A673 (cell line): ENCODE measurements at regions of chr14 and their contacts with region 1.

Region 1: DNA sequence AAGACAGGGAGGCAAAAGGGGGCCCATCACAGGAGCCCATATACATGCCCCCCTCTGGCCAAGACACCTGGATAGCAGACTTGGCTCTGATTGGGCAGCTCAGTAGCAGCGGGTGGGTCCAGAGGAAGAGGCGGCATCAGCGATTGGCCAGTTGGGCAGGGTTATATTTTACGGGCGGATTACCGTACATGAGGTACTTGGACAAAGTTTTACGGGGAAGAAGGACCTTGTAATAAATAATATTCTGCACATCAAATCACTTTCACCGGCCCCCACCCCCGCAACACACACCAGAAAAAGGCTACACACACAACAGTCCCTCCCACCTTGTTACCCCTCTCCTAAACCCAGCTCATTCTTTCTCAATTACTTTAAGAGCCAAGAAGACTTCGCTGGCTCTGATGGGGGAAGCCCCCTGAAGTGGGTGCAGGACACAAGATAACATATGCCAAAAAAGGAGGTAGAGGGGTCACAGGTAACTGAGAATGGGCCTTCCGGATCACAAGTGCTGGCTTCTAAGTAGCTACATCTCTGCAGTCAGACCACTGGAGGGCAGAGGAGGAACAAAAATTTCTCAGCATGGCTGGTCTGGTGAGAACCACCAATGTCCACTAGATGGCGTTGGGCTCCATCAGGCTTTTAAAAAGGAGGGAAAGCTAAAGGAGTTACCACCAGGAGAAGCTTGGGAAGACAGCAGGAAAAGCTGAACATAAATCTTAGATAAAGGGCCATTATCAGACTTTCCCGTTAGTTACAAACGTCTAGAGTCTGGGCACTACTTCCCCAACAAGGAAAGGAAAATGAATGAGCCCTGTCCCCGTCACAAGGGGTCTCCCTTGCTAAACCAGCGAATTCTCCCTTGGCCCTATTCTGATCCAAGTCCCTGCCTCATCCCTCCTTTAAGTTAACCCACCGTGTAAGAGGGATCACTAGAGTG is 11.4 kb upstream of the CDH24 start:
- DNase-seq: peak; percentile 95
- H3K4me3 ChIP-seq: peak overlapping the region; percentile 5
- H3K27ac ChIP-seq: peak overlapping the region; percentile 57
- H3K4me1 ChIP-seq: peaks cover 38% of the 10 kb centered on the region
- H3K27me3 ChIP-seq: no peaks in the 10 kb centered on the region
- CTCF ChIP-seq: peak; percentile 100

Region 2: DNA sequence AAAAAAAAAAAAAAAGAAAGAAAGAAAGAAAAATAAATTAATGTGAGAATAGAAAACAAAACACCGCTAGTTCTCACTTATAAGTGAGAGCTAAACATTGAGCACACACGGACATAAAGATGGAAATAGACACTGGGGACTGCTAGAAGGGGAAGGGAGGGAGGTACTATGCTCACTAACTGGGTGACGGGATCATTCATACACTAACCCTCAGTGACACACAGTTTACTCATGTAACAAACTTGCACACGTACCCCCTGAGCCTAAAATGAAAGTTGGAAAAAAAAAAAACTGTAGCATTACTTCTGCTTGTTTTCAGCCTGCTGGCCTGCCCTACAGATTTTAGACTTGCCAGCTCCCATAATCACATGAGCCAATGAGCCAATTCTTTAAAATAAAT is 129.1 kb before region 1 on chr14:
- CTCF ChIA-PET with region 1: interaction called, 10 read pairs
- POLR2A ChIA-PET with region 1: no interaction called
- intact Hi-C with region 1: no loop called
- DNase-seq: no peak
- H3K4me3 ChIP-seq: no peak overlapping the region
- H3K27ac ChIP-seq: no peak overlapping the region
- H3K4me1 ChIP-seq: no peaks in the 10 kb centered on the region
- H3K27me3 ChIP-seq: no peaks in the 10 kb centered on the region
- CTCF ChIP-seq: no peak

Region 3: GRCh38 chr14:22994762-22995275 is 73.9 kb before region 1 on chr14:
- CTCF ChIA-PET with region 1: interaction called, 12 read pairs
- POLR2A ChIA-PET with region 1: no interaction called
- intact Hi-C with region 1: no loop called
- DNase-seq: peak; percentile 86
- H3K4me3 ChIP-seq: no peak overlapping the region
- H3K27ac ChIP-seq: peak overlapping the region; percentile 22
- H3K4me1 ChIP-seq: peaks cover 37% of the 10 kb centered on the region
- H3K27me3 ChIP-seq: no peaks in the 10 kb centered on the region
- CTCF ChIP-seq: peak; percentile 88

Region 4: GRCh38 chr14:23057757-23058653 is 10.7 kb before region 1 on chr14:
- CTCF ChIA-PET with region 1: interaction called, 14 read pairs
- POLR2A ChIA-PET with region 1: no interaction called
- intact Hi-C with region 1: no loop called
- DNase-seq: peak; percentile 93
- H3K4me3 ChIP-seq: peak overlapping the region; percentile 76
- H3K27ac ChIP-seq: peak overlapping the region; percentile 77
- H3K4me1 ChIP-seq: peaks cover 27% of the 10 kb centered on the region
- H3K27me3 ChIP-seq: no peaks in the 10 kb centered on the region
- CTCF ChIP-seq: peak; percentile 98

Region 5: GRCh38 chr14:23095196-23096108 is 26.7 kb after region 1 on chr14 and contains the start of gene C14orf119:
- CTCF ChIA-PET with region 1: interaction called, 26 read pairs
- POLR2A ChIA-PET with region 1: interaction called, 11 read pairs
- intact Hi-C with region 1: no loop called
- DNase-seq: peak; percentile 100
- H3K4me3 ChIP-seq: peak within 1 kb of the TSS; percentile 64
- H3K27ac ChIP-seq: peak within 1 kb of the TSS; percentile 94
- H3K4me1 ChIP-seq: peaks cover 28% of the 10 kb centered on the region
- H3K27me3 ChIP-seq: no peaks in the 10 kb centered on the region
- CTCF ChIP-seq: no peak
- total RNA-seq, gene C14orf119: 50.3 and 54.5 TPM in 2 replicates

Region 6: DNA sequence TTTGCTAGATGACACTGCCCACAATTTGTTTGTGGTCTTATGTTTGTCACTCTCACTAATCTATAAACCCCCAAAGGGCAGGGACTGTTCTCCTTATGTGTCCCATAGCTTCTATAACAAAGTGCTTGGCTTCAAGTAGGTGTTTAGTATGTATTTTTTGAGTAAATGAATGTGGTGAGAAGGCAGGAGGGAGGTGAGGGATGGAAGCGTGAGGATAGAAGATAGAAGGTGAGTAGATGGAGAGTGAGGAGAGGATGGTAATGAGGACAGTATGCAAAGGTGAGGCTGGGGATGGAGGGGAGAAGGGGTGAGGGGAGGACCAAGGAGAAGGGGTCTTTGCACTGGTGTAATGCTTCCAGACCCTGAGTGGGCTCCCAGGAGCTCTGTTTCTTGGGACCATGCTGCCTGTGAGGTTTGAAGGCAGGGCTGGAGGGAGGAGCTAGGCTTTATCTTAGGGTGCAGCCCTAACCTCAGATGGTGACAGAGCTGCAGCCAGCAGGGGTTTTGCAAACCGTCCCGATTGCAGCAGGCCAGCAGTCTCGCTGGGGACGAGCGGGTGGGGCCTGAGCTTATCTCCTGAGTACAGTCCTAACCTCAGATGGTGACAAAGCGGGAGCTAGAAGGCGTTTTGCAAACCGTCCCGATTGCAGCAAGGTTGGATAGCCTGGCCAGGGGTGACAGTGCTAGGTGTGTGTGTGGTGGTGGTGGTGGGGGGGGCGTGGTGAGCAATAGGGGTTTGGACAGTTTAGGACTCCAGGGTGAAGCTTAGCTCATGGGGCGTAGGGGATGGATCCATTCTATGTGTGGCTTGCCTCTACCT is 43.8 kb after region 1 on chr14:
- CTCF ChIA-PET with region 1: interaction called, 19 read pairs
- POLR2A ChIA-PET with region 1: no interaction called
- intact Hi-C with region 1: no loop called
- DNase-seq: no peak
- H3K4me3 ChIP-seq: no peak overlapping the region
- H3K27ac ChIP-seq: no peak overlapping the region
- H3K4me1 ChIP-seq: no peaks in the 10 kb centered on the region
- H3K27me3 ChIP-seq: peaks cover 13% of the 10 kb centered on the region
- CTCF ChIP-seq: no peak

Region 7: GRCh38 chr14:23174276-23175184 is 105.8 kb after region 1 on chr14:
- CTCF ChIA-PET with region 1: interaction called, 14 read pairs
- POLR2A ChIA-PET with region 1: no interaction called
- intact Hi-C with region 1: no loop called
- DNase-seq: no peak
- H3K4me3 ChIP-seq: no peak overlapping the region
- H3K27ac ChIP-seq: no peak overlapping the region
- H3K4me1 ChIP-seq: peaks cover 37% of the 10 kb centered on the region
- H3K27me3 ChIP-seq: no peaks in the 10 kb centered on the region
- CTCF ChIP-seq: no peak